CD4-positive, alpha-beta memory T cell (primary cell): ENCODE measurements at regions of chr16 and their contacts with region 1.

Region 1: DNA sequence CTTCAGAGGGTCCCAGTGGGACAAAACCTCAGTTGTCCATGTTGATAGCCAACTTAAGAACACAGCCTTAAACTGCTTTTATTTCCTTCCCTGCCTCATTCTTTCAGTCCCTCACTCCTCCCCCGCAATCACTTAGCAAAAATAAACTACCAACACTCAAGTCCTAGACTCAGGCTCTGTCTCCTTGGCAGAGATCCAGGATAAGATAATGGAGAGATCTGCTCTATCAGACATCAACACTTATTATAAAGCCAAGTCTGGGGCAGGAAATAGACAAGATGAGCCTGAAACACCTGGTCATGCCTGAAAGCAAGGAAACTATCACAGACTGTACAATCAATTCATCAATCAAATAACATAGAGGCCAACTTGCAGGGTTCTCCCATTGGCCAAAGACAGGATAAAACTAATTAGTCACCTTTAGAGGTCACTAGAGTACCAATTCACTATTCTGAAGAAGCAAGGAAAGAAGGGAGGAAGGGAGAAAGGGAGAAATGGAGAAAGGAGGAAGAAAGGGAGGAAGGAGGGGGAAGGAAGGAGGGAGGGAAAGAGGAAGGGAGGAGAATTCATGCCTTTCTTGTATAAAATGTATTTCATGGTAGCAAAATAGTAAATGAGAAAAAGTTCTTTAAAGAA is 15.7 kb downstream of the HYDIN start:
- DNase-seq: peak in 1 of 5 donors; percentile 1
- H3K4me3 ChIP-seq: no peak overlapping the region
- H3K4me3 Mint-ChIP-seq: no peak overlapping the region
- H3K27ac ChIP-seq: no peak overlapping the region
- H3K27ac Mint-ChIP-seq: no peak overlapping the region
- H3K4me1 ChIP-seq: no peaks in the 10 kb centered on the region
- H3K4me1 Mint-ChIP-seq: no peaks in the 10 kb centered on the region
- H3K27me3 ChIP-seq: no peaks in the 10 kb centered on the region
- H3K27me3 Mint-ChIP-seq: peaks cover 4 to 5% of the 10 kb centered on the region in 2 donors

Region 2: DNA sequence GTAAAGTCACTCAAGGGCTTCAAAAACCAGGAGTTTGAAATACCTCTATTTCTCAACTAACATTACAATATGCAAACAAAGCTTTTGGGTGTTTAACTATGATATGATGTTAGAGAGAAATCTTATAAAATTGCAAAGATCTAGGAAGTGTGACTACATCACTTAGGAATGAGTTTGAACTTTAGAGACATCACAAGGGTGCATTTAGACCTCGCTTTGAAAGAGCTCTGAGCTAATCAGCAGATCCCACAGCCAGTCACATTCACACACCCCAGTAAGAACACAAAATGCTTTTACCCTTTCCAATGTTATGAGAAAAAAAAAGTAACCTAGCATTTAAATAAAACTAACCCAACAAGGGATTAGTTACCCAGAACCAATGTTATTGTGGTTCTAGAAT is 29.5 kb before region 1 on chr16:
- CTCF ChIA-PET with region 1: no interaction called
- POLR2A ChIA-PET with region 1: no interaction called
- intact Hi-C with region 1: no loop called
- DNase-seq: no peak
- H3K4me3 ChIP-seq: no peak overlapping the region
- H3K4me3 Mint-ChIP-seq: no peak overlapping the region
- H3K27ac ChIP-seq: no peak overlapping the region
- H3K27ac Mint-ChIP-seq: no peak overlapping the region
- H3K4me1 ChIP-seq: no peaks in the 10 kb centered on the region
- H3K4me1 Mint-ChIP-seq: peaks cover 0 to 1% (median under 1%) of the 10 kb centered on the region in 4 donors
- H3K27me3 ChIP-seq: no peaks in the 10 kb centered on the region
- H3K27me3 Mint-ChIP-seq: peaks cover 3 to 9% of the 10 kb centered on the region in 2 donors

Region 3: GRCh38 chr16:71311553-71312158 is 96.8 kb after region 1 on chr16:
- CTCF ChIA-PET with region 1: no interaction called
- POLR2A ChIA-PET with region 1: no interaction called
- intact Hi-C with region 1: loop called (anchors 1 kb)
- DNase-seq: peak in 3 of 5 donors; percentile 18 to 23 (median 19)
- H3K4me3 ChIP-seq: no peak overlapping the region
- H3K4me3 Mint-ChIP-seq: no peak overlapping the region
- H3K27ac ChIP-seq: no peak overlapping the region
- H3K27ac Mint-ChIP-seq: no peak overlapping the region
- H3K4me1 ChIP-seq: no peaks in the 10 kb centered on the region
- H3K4me1 Mint-ChIP-seq: peaks cover 0 to 2% (median 0%) of the 10 kb centered on the region in 4 donors
- H3K27me3 ChIP-seq: no peaks in the 10 kb centered on the region
- H3K27me3 Mint-ChIP-seq: peaks cover 33 to 45% of the 10 kb centered on the region in 2 donors